CD14-positive monocyte (primary cell): ENCODE measurements at regions of chr19 and their contacts with region 1.

Region 1: DNA sequence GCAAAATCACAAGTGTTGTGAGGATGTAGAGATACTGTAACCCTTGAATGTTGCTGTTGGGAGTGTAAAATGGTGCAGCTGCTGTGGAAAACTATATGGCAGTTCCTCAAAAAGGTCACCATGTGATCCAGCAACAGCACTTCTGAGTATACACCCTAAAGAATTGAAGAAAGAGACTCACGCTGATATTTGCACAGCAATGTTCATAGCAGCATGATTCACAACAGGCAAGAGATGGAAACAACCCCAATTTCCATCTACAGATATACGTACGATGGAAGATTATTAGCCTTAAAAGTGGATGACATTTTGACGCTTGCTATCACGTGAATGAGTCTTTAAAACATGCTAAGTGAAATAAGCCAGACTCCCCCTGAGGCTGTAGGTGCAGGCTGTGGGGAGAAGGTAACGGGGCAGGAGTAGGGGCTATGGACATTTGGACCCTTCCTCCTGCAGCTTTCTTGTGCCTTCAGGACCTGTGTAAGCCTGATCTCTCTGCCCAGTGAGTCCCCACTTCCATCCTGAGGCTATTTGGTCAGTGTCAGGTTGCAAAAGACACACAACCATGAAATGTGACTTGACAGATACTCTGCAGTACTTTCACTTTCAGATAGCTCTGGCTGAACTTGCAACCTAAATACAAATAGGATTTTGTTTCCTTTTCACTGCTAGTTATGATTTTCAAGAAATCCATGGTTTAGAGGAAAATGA is 17.6 kb upstream of the EID2 start:
- DNase-seq: peak; percentile 14 to 24 (median 19)
- H3K4me3 ChIP-seq: no peak overlapping the region
- H3K4me3 Mint-ChIP-seq: peak overlapping the region in 1 of 2 donors; percentile 37
- H3K27ac ChIP-seq: peak overlapping the region in 1 of 2 donors; percentile 10
- H3K27ac Mint-ChIP-seq: peak overlapping the region in 6 of 7 donors; percentile 16 to 78 (median 49)
- H3K4me1 ChIP-seq: peaks cover 36 to 51% of the 10 kb centered on the region in 2 donors
- H3K4me1 Mint-ChIP-seq: peaks cover 50% of the 10 kb centered on the region
- H3K27me3 ChIP-seq: peaks cover 2% of the 10 kb centered on the region in 2 donors
- H3K27me3 Mint-ChIP-seq: peaks cover 3 to 13% (median 7%) of the 10 kb centered on the region in 3 donors
- CTCF ChIP-seq: no peak

Region 2: GRCh38 chr19:39264306-39265290 is 293.0 kb before region 1 on chr19:
- intact Hi-C with region 1: no loop called
- DNase-seq: no peak
- H3K4me3 ChIP-seq: no peak overlapping the region
- H3K4me3 Mint-ChIP-seq: peak overlapping the region in 1 of 2 donors; percentile 46
- H3K27ac ChIP-seq: no peak overlapping the region
- H3K27ac Mint-ChIP-seq: no peak overlapping the region
- H3K4me1 ChIP-seq: no peaks in the 10 kb centered on the region
- H3K4me1 Mint-ChIP-seq: no peaks in the 10 kb centered on the region
- H3K27me3 ChIP-seq: peaks cover 25 to 41% of the 10 kb centered on the region in 2 donors
- H3K27me3 Mint-ChIP-seq: peaks cover 42 to 50% (median 43%) of the 10 kb centered on the region in 3 donors
- CTCF ChIP-seq: no peak

Region 3: GRCh38 chr19:39661565-39661964 is 104.0 kb after region 1 on chr19:
- intact Hi-C with region 1: loop called in 1 of 2 experiments (anchors 5 kb)
- DNase-seq: no peak
- H3K4me3 ChIP-seq: no peak overlapping the region
- H3K4me3 Mint-ChIP-seq: no peak overlapping the region
- H3K27ac ChIP-seq: no peak overlapping the region
- H3K27ac Mint-ChIP-seq: no peak overlapping the region
- H3K4me1 ChIP-seq: no peaks in the 10 kb centered on the region
- H3K4me1 Mint-ChIP-seq: no peaks in the 10 kb centered on the region
- H3K27me3 ChIP-seq: no peaks in the 10 kb centered on the region
- H3K27me3 Mint-ChIP-seq: peaks cover 0 to 9% (median 5%) of the 10 kb centered on the region in 3 donors
- CTCF ChIP-seq: no peak

Region 4: DNA sequence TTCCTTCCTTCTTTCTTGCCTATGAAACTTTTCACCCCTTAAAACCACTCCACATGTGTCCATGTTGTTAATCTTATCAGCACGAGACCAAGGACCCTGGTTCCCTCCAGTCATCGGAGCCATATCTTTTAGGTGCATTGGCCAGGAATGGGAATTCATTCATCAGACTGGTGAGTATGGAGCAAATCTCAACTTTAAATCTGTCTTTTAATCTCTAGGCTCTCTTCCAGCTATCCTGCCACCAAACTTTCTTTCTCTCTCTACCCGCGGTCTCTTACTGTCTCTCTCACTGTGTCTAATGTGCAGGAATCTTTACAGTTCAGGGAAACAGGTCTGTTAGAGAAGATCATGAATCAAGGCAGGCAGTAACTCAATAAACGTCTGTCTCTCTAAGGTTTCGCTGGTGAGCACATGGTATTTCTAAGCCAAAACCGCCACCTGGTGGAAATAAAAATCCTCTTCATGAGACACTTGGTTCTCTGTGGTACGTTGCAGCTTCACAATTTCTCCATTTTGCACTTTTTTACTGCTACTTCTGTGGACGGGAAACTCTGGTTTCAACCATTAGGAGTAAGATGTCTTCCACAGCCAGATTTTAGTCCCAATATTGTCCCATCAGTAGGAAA is 114.3 kb after region 1 on chr19:
- intact Hi-C with region 1: loop called (anchors 2 kb)
- DNase-seq: peak; percentile 24 to 51 (median 38)
- H3K4me3 ChIP-seq: no peak overlapping the region
- H3K4me3 Mint-ChIP-seq: no peak overlapping the region
- H3K27ac ChIP-seq: no peak overlapping the region
- H3K27ac Mint-ChIP-seq: no peak overlapping the region
- H3K4me1 ChIP-seq: no peaks in the 10 kb centered on the region
- H3K4me1 Mint-ChIP-seq: peaks cover 3% of the 10 kb centered on the region
- H3K27me3 ChIP-seq: peaks cover 4 to 10% of the 10 kb centered on the region in 2 donors
- H3K27me3 Mint-ChIP-seq: peaks cover 3 to 11% (median 9%) of the 10 kb centered on the region in 3 donors
- CTCF ChIP-seq: peak; percentile 52

Region 5: DNA sequence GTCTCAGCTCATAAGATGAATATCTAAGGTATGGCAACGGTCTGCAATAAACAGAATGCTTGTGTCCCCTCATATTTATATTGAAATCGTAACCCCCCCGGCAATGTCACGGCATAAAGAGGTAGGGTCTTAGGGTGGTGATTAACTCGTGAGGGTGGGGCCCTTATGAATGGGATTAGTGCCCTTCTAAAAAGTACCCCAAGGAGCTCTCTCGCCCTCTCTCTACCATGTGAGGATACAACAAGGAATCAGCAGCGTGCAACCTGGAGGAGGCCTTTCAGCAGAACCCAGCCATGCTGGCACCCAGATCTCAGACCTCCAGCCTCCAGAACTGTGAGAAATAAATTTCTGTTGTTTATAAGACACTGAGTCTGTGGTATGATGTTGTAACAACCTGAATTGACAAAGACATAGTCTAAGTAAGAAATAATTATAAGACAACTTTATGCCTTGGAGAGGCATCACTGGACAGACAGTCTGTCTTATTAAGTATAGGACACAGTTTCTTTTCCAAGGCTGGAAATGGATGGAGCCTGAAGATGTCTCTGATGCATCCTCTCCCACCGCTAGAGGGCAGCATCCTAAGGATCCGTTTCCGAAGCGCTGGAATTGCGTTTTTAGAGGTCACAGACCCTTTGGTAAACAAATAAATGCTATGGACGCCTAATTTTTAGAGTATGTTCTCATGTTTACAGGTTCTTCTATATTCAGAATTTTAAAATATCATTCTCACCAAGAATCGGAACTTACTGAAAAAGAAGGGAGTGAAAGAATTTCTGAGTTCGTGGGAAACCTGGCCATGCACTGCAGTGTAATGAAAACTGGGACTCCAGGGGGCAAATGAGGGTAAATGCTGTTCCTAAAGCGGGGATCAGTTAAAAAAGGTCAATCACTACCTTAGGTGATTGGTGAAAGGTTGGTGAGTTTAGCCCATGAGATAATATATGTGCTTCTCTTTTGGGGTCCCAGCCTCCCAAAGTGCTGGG is 207.8 kb after region 1 on chr19:
- intact Hi-C with region 1: loop called in 1 of 2 experiments (anchors 5 kb)
- DNase-seq: peak; percentile 15 to 48 (median 40)
- H3K4me3 ChIP-seq: no peak overlapping the region
- H3K4me3 Mint-ChIP-seq: no peak overlapping the region
- H3K27ac ChIP-seq: no peak overlapping the region
- H3K27ac Mint-ChIP-seq: no peak overlapping the region
- H3K4me1 ChIP-seq: no peaks in the 10 kb centered on the region
- H3K4me1 Mint-ChIP-seq: no peaks in the 10 kb centered on the region
- H3K27me3 ChIP-seq: no peaks in the 10 kb centered on the region
- H3K27me3 Mint-ChIP-seq: peaks cover 7 to 20% (median 9%) of the 10 kb centered on the region in 3 donors
- CTCF ChIP-seq: peak; percentile 81